CD4-positive, alpha-beta T cell (primary cell): ENCODE measurements at regions of chr4 and their contacts with region 1.

Region 1: DNA sequence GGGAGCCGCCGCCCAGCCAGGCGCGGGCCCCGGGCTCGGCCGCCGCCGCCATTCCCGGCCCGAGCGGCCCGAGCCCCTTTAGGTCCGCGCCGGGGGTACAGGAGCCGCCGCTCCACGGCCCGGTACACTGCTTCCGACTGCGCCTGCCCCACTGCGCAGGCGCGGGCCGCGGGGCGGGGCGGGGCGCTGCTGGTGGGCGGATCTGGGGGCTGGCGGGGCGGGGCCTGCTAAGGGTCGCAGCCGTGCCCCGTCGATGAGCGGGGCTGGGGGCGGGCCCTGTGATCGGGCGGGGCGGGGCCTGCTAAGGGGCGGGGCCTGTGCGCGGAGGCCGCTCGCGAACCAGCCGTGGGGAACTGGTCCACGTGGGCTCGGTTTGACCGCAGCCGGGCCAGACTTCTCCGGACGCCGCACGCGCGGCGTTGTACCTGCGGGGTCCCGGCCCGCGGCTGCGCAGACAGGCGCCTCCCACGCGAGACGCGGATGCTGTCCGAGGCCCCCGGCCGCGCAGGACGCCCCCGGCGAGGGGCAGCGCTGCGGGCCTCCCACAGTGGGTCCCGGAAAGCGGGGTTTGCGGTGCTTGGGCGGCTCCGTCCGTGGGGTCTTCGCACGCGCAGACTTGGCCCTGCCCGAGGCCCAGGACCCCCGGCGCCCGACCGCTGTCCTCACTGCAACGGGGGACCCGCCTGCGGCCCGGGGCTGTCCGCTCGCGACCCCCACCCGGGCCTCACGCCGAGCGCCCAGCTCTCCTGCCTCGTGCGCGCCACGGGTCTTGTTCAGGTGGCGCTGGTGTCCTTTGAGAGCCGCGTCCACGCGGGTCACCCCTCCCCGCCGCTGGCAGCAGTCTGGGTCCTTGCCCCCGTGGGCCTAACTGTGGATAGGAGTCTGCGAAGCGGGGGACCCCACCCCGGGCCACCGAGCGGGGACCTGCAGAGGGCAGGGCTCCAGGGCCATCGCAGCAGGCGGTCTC is at the start of gene DGKQ:
- DNase-seq: peak; percentile 78 to 96 (median 90)
- ATAC-seq: peak; percentile 94
- H3K4me3 ChIP-seq: peak within 1 kb of the TSS; percentile 63
- H3K4me3 Mint-ChIP-seq: peak within 1 kb of the TSS; percentile 60
- H3K27ac ChIP-seq: no peak within 1 kb of the TSS
- H3K27ac Mint-ChIP-seq: no peak within 1 kb of the TSS
- H3K4me1 ChIP-seq: peaks cover 32% of the 10 kb centered on the region
- H3K4me1 Mint-ChIP-seq: no peaks in the 10 kb centered on the region
- H3K27me3 ChIP-seq: no peaks in the 10 kb centered on the region
- H3K27me3 Mint-ChIP-seq: no peaks in the 10 kb centered on the region
- CTCF ChIP-seq: no peak
- total RNA-seq, gene DGKQ: 17.6 to 19.2 TPM

Region 2: GRCh38 chr4:705278-706082 is 268.2 kb before region 1 on chr4 and contains the start of gene PCGF3:
- CTCF ChIA-PET with region 1: no interaction called
- POLR2A ChIA-PET with region 1: no interaction called
- intact Hi-C with region 1: loop called in 1 of 2 experiments (anchors 1 kb)
- DNase-seq: peak; percentile 93 to 99 (median 96)
- ATAC-seq: peak; percentile 95
- H3K4me3 ChIP-seq: peak within 1 kb of the TSS; percentile 77
- H3K4me3 Mint-ChIP-seq: peak within 1 kb of the TSS; percentile 90
- H3K27ac ChIP-seq: peak within 1 kb of the TSS; percentile 58 to 68
- H3K27ac Mint-ChIP-seq: peak within 1 kb of the TSS; percentile 69
- H3K4me1 ChIP-seq: peaks cover 36% of the 10 kb centered on the region
- H3K4me1 Mint-ChIP-seq: peaks cover 25% of the 10 kb centered on the region
- H3K27me3 ChIP-seq: no peaks in the 10 kb centered on the region
- H3K27me3 Mint-ChIP-seq: no peaks in the 10 kb centered on the region
- CTCF ChIP-seq: no peak
- total RNA-seq, gene PCGF3: 45.1 to 48.6 TPM

Region 3: DNA sequence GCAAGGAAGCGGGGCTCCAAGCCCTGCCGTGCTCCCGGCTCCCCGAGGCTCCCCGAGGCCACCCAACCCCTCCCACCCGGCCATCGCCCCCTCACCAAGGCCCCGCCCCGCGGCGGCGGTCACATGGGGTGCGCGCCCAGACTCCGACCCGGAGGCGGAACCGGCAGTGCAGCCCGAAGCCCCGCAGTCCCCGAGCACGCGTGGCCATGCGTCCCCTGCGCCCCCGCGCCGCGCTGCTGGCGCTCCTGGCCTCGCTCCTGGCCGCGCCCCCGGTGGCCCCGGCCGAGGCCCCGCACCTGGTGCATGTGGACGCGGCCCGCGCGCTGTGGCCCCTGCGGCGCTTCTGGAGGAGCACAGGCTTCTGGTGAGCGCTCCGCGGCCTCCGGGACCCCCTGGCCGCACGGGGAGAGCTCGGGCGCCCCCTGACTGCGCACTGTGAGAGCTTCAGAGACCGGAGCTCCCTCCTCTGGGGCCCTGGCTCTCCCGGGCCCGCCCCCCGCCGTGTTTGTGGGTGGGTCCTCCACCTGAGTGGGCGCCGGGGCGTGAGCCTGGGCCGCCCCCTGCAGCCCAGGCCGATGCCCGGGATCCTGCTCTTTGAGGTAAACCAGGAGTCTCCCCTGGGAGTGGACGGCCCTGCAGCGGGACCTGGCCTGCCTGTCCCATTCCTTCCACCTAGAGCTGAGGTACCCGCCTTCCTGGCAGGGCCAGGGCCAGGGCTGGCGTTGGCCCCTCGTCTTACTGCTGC is 13.3 kb after region 1 on chr4 and contains the start of gene IDUA:
- CTCF ChIA-PET with region 1: interaction called, 3 read pairs
- POLR2A ChIA-PET with region 1: interaction called, 5 read pairs
- intact Hi-C with region 1: loop called in 1 of 2 experiments (anchors 1 kb)
- DNase-seq: peak; percentile 73 to 93 (median 86)
- ATAC-seq: peak; percentile 84
- H3K4me3 ChIP-seq: peak within 1 kb of the TSS; percentile 78
- H3K4me3 Mint-ChIP-seq: peak within 1 kb of the TSS; percentile 94
- H3K27ac ChIP-seq: peak within 1 kb of the TSS; percentile 41 to 46
- H3K27ac Mint-ChIP-seq: peak within 1 kb of the TSS; percentile 82
- H3K4me1 ChIP-seq: peaks cover 36% of the 10 kb centered on the region
- H3K4me1 Mint-ChIP-seq: peaks cover 25% of the 10 kb centered on the region
- H3K27me3 ChIP-seq: no peaks in the 10 kb centered on the region
- H3K27me3 Mint-ChIP-seq: no peaks in the 10 kb centered on the region
- CTCF ChIP-seq: peak; percentile 57
- total RNA-seq, gene IDUA: 70.2 to 77.8 TPM